ENCODE measurements at regions of chr18 and their contacts with region 1.

Region 1: DNA sequence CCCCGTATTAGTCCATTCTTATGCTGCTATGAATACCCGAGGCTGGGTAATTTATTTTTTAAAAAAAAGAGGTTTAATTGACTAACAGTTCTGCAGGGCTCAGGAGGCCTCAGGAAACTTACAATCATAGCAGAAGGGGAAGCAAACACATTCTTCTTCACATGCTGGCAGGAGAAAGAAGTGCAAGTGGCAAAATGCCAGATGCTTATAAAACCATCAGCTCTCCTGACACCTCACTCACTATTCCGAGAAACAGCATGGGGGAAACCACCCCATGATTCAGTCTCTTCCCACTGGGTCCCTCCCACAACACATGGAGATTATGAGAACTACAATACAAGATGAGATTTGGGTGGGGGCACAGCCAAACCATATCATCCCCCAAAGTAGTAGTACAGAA is 2148.5 kb upstream of the PIK3C3 start:
- DNase-seq: no peak
- H3K4me3 ChIP-seq: no peak overlapping the region
- H3K4me3 Mint-ChIP-seq: no peak overlapping the region
- H3K27ac Mint-ChIP-seq: no peak overlapping the region
- H3K4me1 ChIP-seq: no peaks in the 10 kb centered on the region
- H3K4me1 Mint-ChIP-seq: no peaks in the 10 kb centered on the region
- H3K27me3 ChIP-seq: no peaks in the 10 kb centered on the region
- H3K27me3 Mint-ChIP-seq: peaks cover 4% of the 10 kb centered on the region
- CTCF ChIP-seq: no peak

Region 2: GRCh38 chr18:39751161-39751560 is 55.4 kb before region 1 on chr18:
- CTCF ChIA-PET with region 1: no interaction called
- POLR2A ChIA-PET with region 1: no interaction called
- intact Hi-C with region 1: loop called (anchors 10 kb)
- DNase-seq: no peak
- H3K4me3 ChIP-seq: no peak overlapping the region
- H3K4me3 Mint-ChIP-seq: no peak overlapping the region
- H3K27ac Mint-ChIP-seq: no peak overlapping the region
- H3K4me1 ChIP-seq: no peaks in the 10 kb centered on the region
- H3K4me1 Mint-ChIP-seq: no peaks in the 10 kb centered on the region
- H3K27me3 ChIP-seq: no peaks in the 10 kb centered on the region
- H3K27me3 Mint-ChIP-seq: no peaks in the 10 kb centered on the region
- CTCF ChIP-seq: no peak

Measured in Caco-2 (cell line).